A549 (cell line): ENCODE measurements at regions of chr1 and their contacts with region 1.

Region 1: DNA sequence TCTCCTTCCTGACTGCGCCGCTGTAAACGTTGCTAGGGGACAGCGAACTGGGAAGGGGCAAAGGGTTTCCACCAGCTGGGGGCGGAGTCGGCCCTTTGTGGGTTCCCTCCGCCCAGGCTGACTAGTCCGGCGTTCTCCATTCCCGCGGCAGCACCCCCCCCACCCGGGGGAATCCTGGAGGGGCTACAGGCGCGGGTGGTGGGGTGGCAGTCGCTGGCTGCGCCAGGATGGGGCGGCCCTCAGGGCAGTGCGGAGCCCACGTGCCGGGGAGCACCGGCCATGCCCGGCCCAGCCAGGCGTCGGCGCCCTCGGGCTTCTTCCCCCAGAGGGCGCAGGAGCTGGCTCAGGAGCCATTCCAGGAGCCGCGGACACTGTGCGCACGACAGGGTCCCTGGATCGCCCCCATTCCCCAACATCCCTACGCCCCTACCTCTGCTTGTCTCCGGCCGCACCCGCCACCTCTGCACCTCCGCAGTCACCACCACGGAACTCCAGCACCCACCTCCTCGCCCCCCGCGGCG is 476 bp downstream of the BATF3 start:
- DNase-seq: peak; percentile 66 to 72
- ATAC-seq: peak; percentile 85 to 88
- H3K4me3 ChIP-seq: peak overlapping the region; percentile 95
- H3K27ac ChIP-seq: peak overlapping the region; percentile 87 to 90
- H3K4me1 ChIP-seq: peaks cover 16% of the 10 kb centered on the region; the same call in 2 of the 3 replicates
- CTCF ChIP-seq: peak; percentile 84
- EP300 ChIP-seq: no peak
- POLR2A ChIP-seq: 0 out of 2 replicates have a peak, but pooled peaks have one; percentile 17
- RAD21 ChIP-seq: peak; percentile 33 to 71; a peak in 4 of 5 replicates

Region 2: DNA sequence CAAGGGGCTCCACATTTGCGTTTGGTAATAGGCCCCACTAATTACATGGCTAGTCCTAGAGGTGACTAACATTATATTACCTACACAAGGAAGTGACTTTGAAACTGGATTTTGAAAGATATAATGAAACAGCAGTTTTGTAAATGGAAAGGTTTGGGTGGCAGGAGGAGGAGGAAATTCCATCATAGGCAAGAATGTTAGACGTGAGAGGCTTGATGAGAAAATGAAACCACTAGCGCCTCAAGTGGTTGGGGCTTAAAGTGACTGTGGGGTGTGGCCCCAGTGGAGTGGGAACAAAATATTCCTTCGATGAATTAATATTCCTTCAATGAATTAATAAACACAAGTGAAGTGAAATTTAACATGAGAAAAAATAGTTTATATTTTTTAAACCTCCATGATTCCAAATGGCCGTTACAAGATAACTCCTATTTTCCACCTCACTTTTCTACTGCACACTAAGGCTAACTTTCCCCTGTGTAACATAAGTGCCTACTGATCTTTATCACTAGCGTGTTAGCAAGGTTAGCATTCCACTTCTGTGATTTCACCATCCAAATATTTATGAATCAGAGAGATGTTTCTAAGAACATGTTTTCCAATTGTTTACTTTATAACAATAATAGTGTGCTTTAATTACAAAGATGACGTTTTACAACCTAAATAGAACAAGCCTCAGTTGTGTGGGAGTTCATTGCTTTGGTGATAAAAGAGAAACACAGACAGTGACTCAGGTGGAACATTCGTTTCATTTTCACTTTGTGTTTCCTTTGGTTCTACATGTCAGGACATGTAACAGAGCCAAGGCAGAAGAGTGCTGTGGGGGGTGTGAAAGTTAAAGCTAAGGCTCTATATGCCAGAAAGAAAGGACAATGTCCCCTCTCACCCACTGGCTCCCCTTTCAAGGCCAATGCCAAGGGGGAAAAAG is 103.1 kb before region 1 on chr1:
- CTCF ChIA-PET with region 1: no interaction called
- POLR2A ChIA-PET with region 1: no interaction called
- DNase-seq: peak; percentile 62 to 85
- ATAC-seq: peak; percentile 86 to 87
- H3K4me3 ChIP-seq: no peak overlapping the region; the same call in 2 of the 3 replicates
- H3K27ac ChIP-seq: peak overlapping the region; percentile 79 to 84
- H3K4me1 ChIP-seq: peaks cover 31% of the 10 kb centered on the region
- CTCF ChIP-seq: peak; percentile 69
- EP300 ChIP-seq: peak; percentile 57 to 60; a peak in 3 of 5 replicates
- POLR2A ChIP-seq: no peak
- RAD21 ChIP-seq: peak; percentile 49 to 64; a peak in 4 of 5 replicates

Region 3: DNA sequence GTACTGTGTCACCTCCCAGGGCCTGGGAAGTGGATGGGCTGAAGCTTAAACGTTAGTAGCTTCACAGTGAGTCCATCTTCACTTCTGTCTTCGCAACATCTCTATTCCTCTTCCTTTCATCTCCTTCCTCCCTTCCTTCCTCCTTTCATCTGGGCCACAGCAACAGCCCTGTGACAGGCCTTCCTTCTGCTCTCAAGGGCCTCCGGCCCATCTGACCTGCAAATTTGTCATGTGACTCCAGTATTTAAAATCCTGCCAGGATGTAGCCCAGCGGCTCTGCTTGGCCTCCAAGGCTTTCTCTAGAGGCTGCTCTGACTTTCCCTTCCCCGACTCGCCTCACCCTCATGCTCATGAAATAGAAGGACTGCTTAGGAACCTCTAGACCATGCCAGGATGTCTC is 11.4 kb after region 1 on chr1:
- CTCF ChIA-PET with region 1: interaction called, 12 read pairs
- POLR2A ChIA-PET with region 1: no interaction called
- DNase-seq: no peak
- ATAC-seq: no peak; a peak in 1 of 6 replicates
- H3K4me3 ChIP-seq: no peak overlapping the region
- H3K27ac ChIP-seq: no peak overlapping the region
- H3K4me1 ChIP-seq: 0 out of 3 replicates have a peak, but pooled peaks cover 5% of the 10 kb centered on the region
- CTCF ChIP-seq: no peak
- EP300 ChIP-seq: no peak
- POLR2A ChIP-seq: no peak
- RAD21 ChIP-seq: no peak

Region 4: DNA sequence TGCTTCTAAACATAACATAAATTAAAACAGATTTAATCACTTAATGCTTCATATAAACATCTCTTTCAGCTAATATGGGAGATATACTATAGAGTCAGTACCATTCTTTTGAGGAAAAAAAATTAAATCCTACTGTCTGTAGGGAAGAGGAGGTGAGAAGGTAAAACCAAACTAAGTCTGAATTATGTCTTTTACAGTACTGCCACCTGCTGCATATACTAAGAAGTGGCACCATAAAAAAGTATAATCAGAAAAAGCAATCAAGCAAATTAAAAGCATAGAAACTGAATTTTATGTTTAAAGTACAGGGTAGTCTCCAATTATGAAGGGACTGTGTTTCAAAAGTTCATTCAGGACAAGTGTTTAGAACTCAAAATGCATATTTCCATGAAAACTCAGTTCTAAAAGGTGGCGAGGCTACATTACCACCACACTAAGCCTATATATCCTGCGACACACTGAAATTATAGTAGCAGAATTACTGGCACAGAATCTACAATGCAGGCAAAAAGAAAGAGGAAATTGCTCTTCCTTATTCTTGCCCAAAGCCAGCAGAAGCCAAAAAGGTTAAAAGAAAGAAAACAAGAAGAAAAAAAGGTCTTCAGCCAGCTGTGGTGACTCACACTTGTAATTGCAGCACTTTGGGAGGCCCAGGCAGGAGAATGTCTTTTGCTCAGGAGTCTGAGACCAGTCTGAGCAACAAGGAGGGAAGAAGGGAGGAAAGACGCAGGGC is 83.4 kb after region 1 on chr1:
- CTCF ChIA-PET with region 1: interaction called, 11 read pairs
- POLR2A ChIA-PET with region 1: no interaction called
- DNase-seq: peak in 1 of 2 experiments; percentile 48
- ATAC-seq: peak; percentile 78 to 80
- H3K4me3 ChIP-seq: no peak overlapping the region
- H3K27ac ChIP-seq: no peak overlapping the region
- H3K4me1 ChIP-seq: no peaks in the 10 kb centered on the region
- CTCF ChIP-seq: peak; percentile 83
- EP300 ChIP-seq: no peak
- POLR2A ChIP-seq: no peak
- RAD21 ChIP-seq: peak; percentile 78 to 85